Posterior vena cava (tissue), 2 donors: ENCODE measurements at regions of chr2 and their contacts with region 1.

Region 1: GRCh38 chr2:134783912-134784311 is 54.5 kb upstream of the ACMSD start:
- DNase-seq: no peak

Region 2: GRCh38 chr2:133777607-133778006 is 1006.3 kb before region 1 on chr2:
- intact Hi-C with region 1: no loop called
- DNase-seq: no peak

Region 3: DNA sequence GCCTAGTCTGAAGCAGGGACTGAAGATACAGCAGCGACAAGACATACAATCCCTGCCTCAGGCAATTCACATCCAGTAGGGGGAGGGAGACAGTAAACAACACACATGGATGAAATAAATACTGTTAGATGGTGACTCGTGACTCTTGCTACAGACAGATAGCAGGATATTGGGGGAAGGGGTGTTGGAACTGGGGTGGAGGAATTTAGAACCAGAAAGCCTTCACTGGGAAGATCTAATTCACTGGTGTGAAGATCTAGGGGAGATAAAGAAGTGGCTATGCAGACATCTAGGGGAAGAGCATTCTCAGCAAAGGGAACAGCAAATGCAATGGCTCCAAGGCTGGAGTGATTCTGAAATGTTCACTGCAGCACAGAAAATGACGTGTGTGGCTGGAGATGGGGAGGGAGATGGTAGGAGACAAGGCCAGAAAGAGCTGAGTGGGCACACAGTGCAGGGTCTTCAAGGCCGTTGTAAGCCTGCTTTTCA is 12.6 kb before region 1 on chr2:
- intact Hi-C with region 1: loop called in 1 of 2 experiments (anchors 1 kb)
- DNase-seq: no peak

Region 4: DNA sequence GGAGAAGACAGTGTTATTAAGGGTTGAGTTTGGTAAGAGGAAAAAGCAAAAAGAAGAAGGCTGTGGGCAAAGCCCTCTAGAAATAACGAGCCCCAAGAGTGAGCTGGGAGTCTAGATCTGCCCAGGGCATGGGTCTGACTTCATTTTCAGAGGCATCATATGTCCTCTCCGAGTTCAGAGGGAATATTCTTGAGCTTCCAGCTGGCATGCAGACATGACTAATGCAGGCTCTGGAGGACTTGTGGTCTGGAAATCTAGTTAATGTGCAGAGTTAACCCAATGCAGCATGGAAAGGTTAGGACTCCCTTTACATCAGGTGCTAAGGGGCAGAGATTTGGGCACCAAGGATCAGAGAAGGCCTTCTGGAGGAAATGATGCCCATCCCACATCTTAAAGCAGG is 61.8 kb after region 1 on chr2:
- intact Hi-C with region 1: no loop called
- DNase-seq: no peak